CD8-positive, alpha-beta T cell (primary cell): ENCODE measurements at regions of chr3 and their contacts with region 1.

Region 1: DNA sequence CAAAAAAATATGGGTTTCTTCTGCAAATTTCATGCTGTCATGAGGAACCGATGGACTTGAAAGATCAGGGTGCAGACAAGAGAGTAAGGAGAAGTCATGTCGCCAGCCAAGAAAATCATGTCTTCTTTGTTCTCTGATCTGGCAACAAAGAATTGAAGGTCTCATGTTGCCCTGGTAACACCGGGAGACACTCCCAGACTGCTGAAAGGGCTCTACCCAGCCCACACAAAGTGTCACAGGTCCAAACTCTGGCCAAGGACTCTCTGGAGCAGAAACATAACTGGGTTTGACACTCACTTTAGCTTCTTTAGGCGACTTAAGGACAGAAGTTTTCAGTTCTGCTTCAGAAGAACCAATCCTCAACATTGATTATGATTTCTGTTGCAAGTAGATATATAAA is 42.9 kb downstream of the SIDT1 start:
- DNase-seq: no peak
- ATAC-seq: no peak
- H3K4me3 ChIP-seq: no peak overlapping the region
- H3K4me3 Mint-ChIP-seq: no peak overlapping the region
- H3K27ac ChIP-seq: no peak overlapping the region
- H3K27ac Mint-ChIP-seq: peak overlapping the region; percentile 61
- H3K4me1 ChIP-seq: no peaks in the 10 kb centered on the region
- H3K4me1 Mint-ChIP-seq: peaks cover 2% of the 10 kb centered on the region
- H3K27me3 ChIP-seq: no peaks in the 10 kb centered on the region
- H3K27me3 Mint-ChIP-seq: no peaks in the 10 kb centered on the region
- CTCF ChIP-seq: no peak

Region 2: GRCh38 chr3:113051302-113051711 is 523.9 kb before region 1 on chr3:
- CTCF ChIA-PET with region 1: interaction called, 4 read pairs
- POLR2A ChIA-PET with region 1: no interaction called
- intact Hi-C with region 1: loop called (anchors 1 to 2 kb)
- DNase-seq: peak; percentile 75 to 91 (median 84)
- ATAC-seq: peak; percentile 100
- H3K4me3 ChIP-seq: no peak overlapping the region
- H3K4me3 Mint-ChIP-seq: no peak overlapping the region
- H3K27ac ChIP-seq: no peak overlapping the region
- H3K27ac Mint-ChIP-seq: no peak overlapping the region
- H3K4me1 ChIP-seq: no peaks in the 10 kb centered on the region
- H3K4me1 Mint-ChIP-seq: no peaks in the 10 kb centered on the region
- H3K27me3 ChIP-seq: no peaks in the 10 kb centered on the region
- H3K27me3 Mint-ChIP-seq: no peaks in the 10 kb centered on the region
- CTCF ChIP-seq: peak; percentile 84

Region 3: DNA sequence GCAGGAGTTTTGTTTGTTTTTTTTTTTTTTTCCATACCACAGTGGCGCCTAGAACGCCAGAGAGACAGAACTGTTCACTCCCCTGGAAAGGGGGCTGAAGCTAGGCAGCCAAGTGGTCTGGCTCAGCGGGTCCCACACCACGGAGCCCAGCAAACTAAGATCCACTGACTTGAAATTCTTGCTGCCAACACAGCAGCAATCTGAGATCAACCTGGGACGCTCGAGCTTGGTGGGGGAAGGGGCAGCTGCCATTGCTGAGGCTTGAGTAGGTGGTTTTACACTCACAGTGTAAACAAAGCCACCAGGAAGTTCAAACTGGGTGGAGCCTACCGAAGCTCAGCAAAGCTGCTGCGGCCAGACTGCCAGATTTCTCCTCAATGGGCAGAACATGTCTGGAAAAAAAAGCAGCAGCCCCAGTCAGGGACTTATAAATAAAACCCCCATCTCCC is 90.0 kb before region 1 on chr3:
- CTCF ChIA-PET with region 1: interaction called, 18 read pairs
- POLR2A ChIA-PET with region 1: no interaction called
- intact Hi-C with region 1: no loop called
- DNase-seq: peak; percentile 4 to 75 (median 49)
- ATAC-seq: peak; percentile 68
- H3K4me3 ChIP-seq: peak overlapping the region; percentile 11 to 19
- H3K4me3 Mint-ChIP-seq: peak overlapping the region; percentile 60
- H3K27ac ChIP-seq: peak overlapping the region; percentile 14 to 47
- H3K27ac Mint-ChIP-seq: peak overlapping the region; percentile 85
- H3K4me1 ChIP-seq: peaks cover 11% of the 10 kb centered on the region
- H3K4me1 Mint-ChIP-seq: peaks cover 15% of the 10 kb centered on the region
- H3K27me3 ChIP-seq: no peaks in the 10 kb centered on the region
- H3K27me3 Mint-ChIP-seq: no peaks in the 10 kb centered on the region
- CTCF ChIP-seq: no peak

Region 4: DNA sequence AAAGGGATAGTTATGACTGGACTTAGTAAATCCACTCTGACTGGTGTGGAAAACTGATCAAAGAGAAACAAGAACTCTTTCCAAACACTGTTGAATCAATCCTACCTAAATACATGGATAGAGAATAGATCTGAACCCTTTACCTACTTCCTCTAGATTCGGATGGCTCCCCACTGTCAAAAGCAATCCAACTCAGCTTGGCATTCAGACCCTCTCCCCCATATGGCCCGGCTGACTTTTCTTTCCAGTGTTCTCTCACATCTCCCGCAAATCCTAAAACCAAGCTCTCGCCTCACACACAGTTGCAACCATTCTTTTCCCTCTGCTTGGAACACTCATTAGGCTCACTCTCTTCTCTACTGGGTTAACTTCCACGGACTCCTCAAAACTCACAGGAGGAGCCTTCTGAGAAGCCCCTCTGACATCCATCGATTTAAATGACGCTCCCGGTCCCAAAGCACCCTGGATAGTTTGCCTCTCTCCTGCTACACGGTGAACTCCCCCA is 60.9 kb before region 1 on chr3:
- CTCF ChIA-PET with region 1: interaction called, 33 read pairs
- POLR2A ChIA-PET with region 1: no interaction called
- intact Hi-C with region 1: loop called in 1 of 2 experiments (anchors 5 kb)
- DNase-seq: no peak
- ATAC-seq: no peak
- H3K4me3 ChIP-seq: peak overlapping the region; percentile 82 to 96
- H3K4me3 Mint-ChIP-seq: no peak overlapping the region
- H3K27ac ChIP-seq: peak overlapping the region; percentile 89 to 91
- H3K27ac Mint-ChIP-seq: no peak overlapping the region
- H3K4me1 ChIP-seq: peaks cover 10% of the 10 kb centered on the region
- H3K4me1 Mint-ChIP-seq: peaks cover 18% of the 10 kb centered on the region
- H3K27me3 ChIP-seq: no peaks in the 10 kb centered on the region
- H3K27me3 Mint-ChIP-seq: peaks cover 3% of the 10 kb centered on the region
- CTCF ChIP-seq: no peak

Region 5: GRCh38 chr3:113552851-113553250 is 22.4 kb before region 1 on chr3:
- CTCF ChIA-PET with region 1: interaction called, 37 read pairs
- POLR2A ChIA-PET with region 1: no interaction called
- intact Hi-C with region 1: no loop called
- DNase-seq: peak in 5 of 9 experiments; percentile 30 to 70 (median 55)
- ATAC-seq: peak; percentile 93
- H3K4me3 ChIP-seq: no peak overlapping the region
- H3K4me3 Mint-ChIP-seq: no peak overlapping the region
- H3K27ac ChIP-seq: no peak overlapping the region
- H3K27ac Mint-ChIP-seq: peak overlapping the region; percentile 12
- H3K4me1 ChIP-seq: no peaks in the 10 kb centered on the region
- H3K4me1 Mint-ChIP-seq: peaks cover 62% of the 10 kb centered on the region
- H3K27me3 ChIP-seq: no peaks in the 10 kb centered on the region
- H3K27me3 Mint-ChIP-seq: no peaks in the 10 kb centered on the region
- CTCF ChIP-seq: peak; percentile 40

Region 6: DNA sequence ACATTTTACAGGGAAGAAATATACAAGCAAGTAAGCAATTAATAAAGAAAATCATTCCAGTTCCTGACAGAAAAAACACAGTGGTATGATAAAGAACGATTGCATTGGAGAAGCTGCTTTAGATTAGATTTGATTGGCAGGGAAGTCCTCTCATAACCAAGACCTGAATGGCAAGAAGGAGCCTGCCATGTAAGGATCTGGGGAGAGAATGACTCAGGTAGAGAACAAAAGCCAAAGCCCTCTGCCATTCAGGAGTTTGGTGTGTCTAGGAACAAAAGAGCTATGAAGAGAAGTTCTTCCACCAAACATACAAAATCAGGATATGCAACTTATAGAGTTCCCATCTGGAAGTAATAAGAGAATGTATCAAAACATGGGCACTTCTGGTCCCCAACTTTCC is 14.8 kb after region 1 on chr3:
- CTCF ChIA-PET with region 1: interaction called, 29 read pairs
- POLR2A ChIA-PET with region 1: no interaction called
- intact Hi-C with region 1: no loop called
- DNase-seq: no peak
- ATAC-seq: no peak
- H3K4me3 ChIP-seq: no peak overlapping the region
- H3K4me3 Mint-ChIP-seq: no peak overlapping the region
- H3K27ac ChIP-seq: no peak overlapping the region
- H3K27ac Mint-ChIP-seq: peak overlapping the region; percentile 37
- H3K4me1 ChIP-seq: no peaks in the 10 kb centered on the region
- H3K4me1 Mint-ChIP-seq: peaks cover 13% of the 10 kb centered on the region
- H3K27me3 ChIP-seq: no peaks in the 10 kb centered on the region
- H3K27me3 Mint-ChIP-seq: no peaks in the 10 kb centered on the region
- CTCF ChIP-seq: no peak